Psoas muscle (tissue), 8 donors: ENCODE measurements at regions of chr4 and their contacts with region 1.

Region 1: DNA sequence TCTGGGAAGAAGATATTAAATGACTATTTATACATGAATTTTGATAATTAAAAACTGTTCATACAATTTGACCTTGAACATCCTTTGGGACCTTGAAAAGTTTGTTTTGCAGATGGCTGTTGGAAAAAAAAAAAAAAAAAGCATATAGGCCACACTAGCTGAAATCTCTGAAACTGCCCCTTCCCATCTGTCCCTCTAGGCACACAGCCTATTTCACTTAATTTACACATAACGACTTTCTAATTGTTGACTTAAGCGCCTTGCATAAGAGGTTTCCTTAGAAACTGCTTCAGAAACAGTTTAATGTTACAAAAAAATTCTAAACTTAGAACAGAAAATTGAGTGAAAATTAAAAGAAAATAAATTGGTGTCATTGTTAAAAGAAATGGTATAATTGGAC is 131.0 kb downstream of the COX18 start:
- DNase-seq: no peak
- ATAC-seq: no peak
- H3K4me3 ChIP-seq: no peak overlapping the region
- H3K27ac ChIP-seq: no peak overlapping the region
- H3K4me1 ChIP-seq: no peaks in the 10 kb centered on the region
- H3K27me3 ChIP-seq: no peaks in the 10 kb centered on the region
- CTCF ChIP-seq: no peak

Region 2: GRCh38 chr4:72666910-72667309 is 271.6 kb before region 1 on chr4:
- intact Hi-C with region 1: no loop called
- DNase-seq: no peak
- ATAC-seq: no peak
- H3K4me3 ChIP-seq: no peak overlapping the region
- H3K27ac ChIP-seq: no peak overlapping the region
- H3K4me1 ChIP-seq: no peaks in the 10 kb centered on the region
- H3K27me3 ChIP-seq: no peaks in the 10 kb centered on the region
- CTCF ChIP-seq: no peak

Region 3: GRCh38 chr4:72969976-72970375 is 31.5 kb after region 1 on chr4:
- intact Hi-C with region 1: loop called in 1 of 2 experiments (anchors 1 kb)
- DNase-seq: no peak
- ATAC-seq: no peak
- H3K4me3 ChIP-seq: no peak overlapping the region
- H3K27ac ChIP-seq: no peak overlapping the region
- H3K4me1 ChIP-seq: no peaks in the 10 kb centered on the region
- H3K27me3 ChIP-seq: no peaks in the 10 kb centered on the region
- CTCF ChIP-seq: no peak

Region 4: GRCh38 chr4:72997409-72997808 is 58.9 kb after region 1 on chr4:
- intact Hi-C with region 1: no loop called
- DNase-seq: no peak
- ATAC-seq: no peak
- H3K4me3 ChIP-seq: no peak overlapping the region
- H3K27ac ChIP-seq: no peak overlapping the region
- H3K4me1 ChIP-seq: no peaks in the 10 kb centered on the region
- H3K27me3 ChIP-seq: no peaks in the 10 kb centered on the region
- CTCF ChIP-seq: no peak

Region 5: GRCh38 chr4:73045879-73046278 is 107.4 kb after region 1 on chr4:
- intact Hi-C with region 1: no loop called
- DNase-seq: no peak
- ATAC-seq: no peak
- H3K4me3 ChIP-seq: no peak overlapping the region
- H3K27ac ChIP-seq: no peak overlapping the region
- H3K4me1 ChIP-seq: no peaks in the 10 kb centered on the region
- H3K27me3 ChIP-seq: peaks cover 0 to 2% (median 0%) of the 10 kb centered on the region in 3 donors
- CTCF ChIP-seq: no peak